ENCODE measurements at regions of chr2 and their contacts with region 1.

Region 1: DNA sequence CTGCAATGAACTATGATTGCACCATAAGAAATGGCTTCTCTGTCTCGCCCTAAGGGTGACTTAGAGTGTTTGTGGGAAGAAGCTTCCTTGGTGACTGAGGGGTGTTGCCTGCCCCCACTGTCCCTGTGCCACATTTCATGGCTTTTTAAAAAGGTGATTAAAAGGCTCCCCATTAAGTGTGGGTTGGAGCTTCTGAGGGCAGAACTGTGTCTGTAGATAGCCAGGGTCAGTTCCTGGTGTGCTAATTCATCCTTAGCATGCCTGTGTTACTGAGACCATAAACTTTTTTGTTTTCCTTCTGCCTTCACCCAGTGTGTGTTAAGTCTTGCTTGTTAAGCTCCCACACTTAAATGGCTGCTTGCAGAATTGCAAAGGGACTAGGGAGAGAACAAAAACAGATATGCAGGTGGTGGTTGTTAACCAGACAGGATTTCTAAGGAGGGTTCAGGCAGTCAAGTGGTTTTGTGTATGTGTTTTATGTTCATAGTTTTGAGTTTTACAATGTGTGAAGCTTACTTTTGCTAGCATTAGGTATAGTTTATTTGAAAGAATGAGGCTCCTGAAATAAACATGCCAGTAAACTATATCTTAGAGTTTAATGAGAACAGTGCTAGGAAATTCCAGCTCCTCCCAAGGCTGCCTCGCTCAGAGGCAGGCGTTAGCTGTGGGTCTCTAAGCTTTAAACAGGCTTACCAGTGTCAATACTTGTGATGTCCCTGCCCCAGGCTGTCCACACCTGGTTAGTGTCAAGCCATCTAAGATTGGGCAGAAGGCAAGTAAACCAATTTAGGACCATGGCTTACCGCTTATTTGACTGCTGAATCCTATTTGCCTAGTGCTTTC is 14.5 kb downstream of the CERS6 start:
- DNase-seq: no peak
- ATAC-seq: no peak
- H3K4me3 Mint-ChIP-seq: no peak overlapping the region
- H3K27ac Mint-ChIP-seq: no peak overlapping the region
- H3K4me1 Mint-ChIP-seq: peaks cover 46% of the 10 kb centered on the region
- H3K27me3 Mint-ChIP-seq: no peaks in the 10 kb centered on the region

Region 2: GRCh38 chr2:167980439-167980838 is 490.1 kb before region 1 on chr2:
- CTCF ChIA-PET with region 1: no interaction called
- POLR2A ChIA-PET with region 1: no interaction called
- DNase-seq: no peak
- ATAC-seq: no peak
- H3K4me3 Mint-ChIP-seq: no peak overlapping the region
- H3K27ac Mint-ChIP-seq: no peak overlapping the region
- H3K4me1 Mint-ChIP-seq: peaks cover 6% of the 10 kb centered on the region
- H3K27me3 Mint-ChIP-seq: no peaks in the 10 kb centered on the region

Region 3: DNA sequence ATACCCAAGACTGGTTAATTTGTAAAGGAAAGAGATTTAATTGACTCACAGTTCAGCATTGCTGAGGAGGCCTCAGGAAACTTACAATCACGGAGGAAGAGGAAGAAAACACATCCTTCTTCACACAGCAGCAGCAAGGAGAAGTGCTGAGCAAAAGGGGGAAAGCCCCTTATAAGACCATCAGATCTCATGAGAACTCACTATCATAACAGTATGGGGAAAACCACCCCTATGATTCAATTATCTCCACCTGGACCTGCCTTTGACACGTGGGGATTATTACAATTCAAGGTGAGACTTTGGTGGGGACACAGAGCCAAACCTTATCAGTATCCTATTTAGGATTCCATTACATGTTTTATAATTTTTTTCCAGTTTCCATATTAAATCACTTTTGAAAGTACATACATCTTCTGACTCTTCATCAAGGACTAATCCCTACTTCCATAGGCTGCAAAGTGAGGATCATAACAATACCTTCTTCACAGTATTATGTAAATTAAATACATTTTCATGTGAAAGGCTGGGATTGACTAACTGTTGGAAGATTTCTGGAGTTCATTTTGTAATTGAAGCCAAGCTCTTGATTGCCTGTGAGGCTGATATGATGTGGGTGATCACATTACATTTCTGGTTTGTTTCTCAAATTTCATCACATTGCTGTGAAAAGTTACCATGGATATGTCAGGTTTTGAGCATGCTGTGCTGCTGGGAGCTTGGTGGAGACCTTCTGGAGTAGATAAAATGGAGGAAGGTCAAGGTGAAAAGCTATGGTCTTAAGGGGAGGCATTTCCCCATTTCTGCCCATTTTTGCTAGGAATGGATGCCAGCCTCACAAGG is 46.2 kb before region 1 on chr2:
- CTCF ChIA-PET with region 1: no interaction called
- POLR2A ChIA-PET with region 1: no interaction called
- DNase-seq: no peak
- ATAC-seq: no peak
- H3K4me3 Mint-ChIP-seq: no peak overlapping the region
- H3K27ac Mint-ChIP-seq: no peak overlapping the region
- H3K4me1 Mint-ChIP-seq: peaks cover 2% of the 10 kb centered on the region
- H3K27me3 Mint-ChIP-seq: no peaks in the 10 kb centered on the region

Region 4: DNA sequence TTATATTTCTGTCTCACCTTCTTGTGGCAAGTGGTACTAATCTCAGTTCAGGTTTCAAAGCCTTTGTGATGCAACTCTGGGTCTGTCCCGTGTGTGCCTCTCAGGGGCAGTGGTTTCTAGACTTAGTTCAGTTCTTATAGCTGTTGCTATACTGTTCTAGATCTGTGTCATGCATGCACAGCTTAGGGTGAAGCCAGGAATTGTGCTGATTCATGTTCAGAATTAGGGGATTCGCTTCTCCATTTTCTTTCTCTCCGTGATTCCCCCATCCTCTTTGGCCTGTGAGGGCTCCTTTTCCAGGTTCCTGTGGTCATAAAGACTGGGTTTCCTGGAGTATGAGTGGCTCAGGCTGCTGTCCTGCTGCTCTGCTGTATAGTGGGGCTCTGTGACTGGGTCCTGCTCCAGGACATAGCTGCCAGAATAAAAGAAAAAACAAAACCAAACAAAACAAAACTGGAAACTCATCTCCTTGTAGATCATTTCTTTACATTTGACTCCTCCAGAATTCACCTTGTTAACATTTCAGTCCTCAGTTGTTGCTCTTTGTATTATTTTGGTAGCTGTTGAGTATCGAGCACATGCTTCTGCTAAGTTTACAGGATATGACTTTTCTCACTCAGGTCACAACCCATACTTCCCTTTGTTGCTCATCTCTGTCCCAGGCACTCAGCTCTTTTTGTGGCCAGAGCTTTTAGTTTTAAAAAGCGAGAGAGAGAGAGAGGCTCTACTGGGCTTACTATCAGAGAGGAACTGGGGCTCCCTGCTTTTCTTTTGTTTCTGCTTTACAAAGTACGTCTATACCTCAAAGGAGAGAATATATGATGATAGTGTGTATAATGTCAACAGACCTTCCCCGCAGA is 19.7 kb after region 1 on chr2:
- CTCF ChIA-PET with region 1: interaction called, 13 read pairs
- POLR2A ChIA-PET with region 1: interaction called, 3 read pairs
- DNase-seq: peak; percentile 59
- ATAC-seq: peak; percentile 87
- H3K4me3 Mint-ChIP-seq: peak overlapping the region; percentile 72
- H3K27ac Mint-ChIP-seq: peak overlapping the region; percentile 80
- H3K4me1 Mint-ChIP-seq: peaks cover 40% of the 10 kb centered on the region
- H3K27me3 Mint-ChIP-seq: no peaks in the 10 kb centered on the region

Region 5: GRCh38 chr2:168510125-168510756 is 39.7 kb after region 1 on chr2:
- CTCF ChIA-PET with region 1: no interaction called
- POLR2A ChIA-PET with region 1: no interaction called
- DNase-seq: no peak
- ATAC-seq: no peak
- H3K4me3 Mint-ChIP-seq: no peak overlapping the region
- H3K27ac Mint-ChIP-seq: no peak overlapping the region
- H3K4me1 Mint-ChIP-seq: peaks cover 6% of the 10 kb centered on the region
- H3K27me3 Mint-ChIP-seq: no peaks in the 10 kb centered on the region